T-cell (primary cell): ENCODE measurements at regions of chr10 and their contacts with region 1.

Region 1: DNA sequence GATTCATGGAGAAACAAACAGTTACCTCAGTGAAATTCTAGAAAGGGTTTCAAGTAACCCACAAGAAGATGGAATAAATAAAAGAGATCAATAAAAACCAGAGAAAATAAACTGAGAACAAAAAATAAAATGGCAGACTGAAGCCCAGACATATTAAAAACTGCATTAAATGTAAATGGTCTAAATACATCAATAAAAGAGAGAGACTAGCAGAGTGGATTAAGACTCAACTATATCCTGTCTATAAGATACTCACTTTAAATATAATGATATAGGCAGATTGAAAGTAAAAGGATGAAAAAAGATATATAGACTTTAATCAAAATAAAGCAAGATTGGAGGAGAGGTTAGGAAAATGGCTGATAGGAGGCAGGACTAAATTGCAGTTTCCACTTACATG is 18.8 kb upstream of the EBF3 start:
- DNase-seq: no peak
- ATAC-seq: no peak
- H3K4me3 ChIP-seq: no peak overlapping the region
- H3K4me3 Mint-ChIP-seq: no peak overlapping the region
- H3K27ac ChIP-seq: no peak overlapping the region
- H3K27ac Mint-ChIP-seq: no peak overlapping the region
- H3K4me1 ChIP-seq: no peaks in the 10 kb centered on the region
- H3K4me1 Mint-ChIP-seq: no peaks in the 10 kb centered on the region
- H3K27me3 ChIP-seq: peaks cover 2 to 32% of the 10 kb centered on the region in 2 experiments
- H3K27me3 Mint-ChIP-seq: peaks cover 55 to 64% of the 10 kb centered on the region in 2 donors

Region 2: DNA sequence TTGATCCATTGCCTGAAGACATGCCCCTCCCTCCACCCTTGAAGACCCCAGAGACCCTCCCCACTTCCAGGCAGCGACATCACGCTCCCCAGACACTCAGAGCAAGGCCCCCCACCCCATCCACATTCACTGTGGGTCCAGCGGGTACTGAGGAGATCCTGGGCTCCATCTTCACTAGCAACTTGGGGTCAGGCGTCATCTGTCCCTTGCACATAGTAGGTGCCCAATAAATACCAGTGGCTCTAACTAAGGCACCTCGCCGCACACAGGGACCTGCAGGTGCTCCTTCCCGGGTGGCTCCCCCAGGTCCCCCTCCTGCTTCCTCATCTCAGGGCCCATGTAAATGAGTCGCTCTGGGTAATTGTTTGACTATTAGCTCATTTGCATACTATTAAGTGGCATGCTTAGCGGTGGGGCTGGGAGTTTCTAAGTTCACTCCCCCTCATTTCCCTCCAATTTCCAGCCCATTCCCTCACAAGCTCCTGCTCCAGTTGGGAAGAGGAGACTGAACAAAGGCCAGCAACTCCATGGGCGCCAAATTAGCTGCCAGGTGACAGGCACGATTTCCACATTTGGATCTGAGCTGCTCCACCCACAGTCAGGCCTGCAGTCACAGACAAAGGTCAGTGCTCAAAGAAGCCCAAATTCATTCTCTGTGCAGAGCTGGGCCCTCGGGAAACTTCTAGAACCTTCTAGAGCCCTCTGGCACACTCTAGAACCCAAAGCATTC is 48.5 kb before region 1 on chr10:
- CTCF ChIA-PET with region 1: no interaction called
- POLR2A ChIA-PET with region 1: interaction called in 1 of 2 experiments, 12 read pairs
- DNase-seq: no peak
- ATAC-seq: no peak
- H3K4me3 ChIP-seq: no peak overlapping the region
- H3K4me3 Mint-ChIP-seq: no peak overlapping the region
- H3K27ac ChIP-seq: no peak overlapping the region
- H3K27ac Mint-ChIP-seq: no peak overlapping the region
- H3K4me1 ChIP-seq: no peaks in the 10 kb centered on the region
- H3K4me1 Mint-ChIP-seq: no peaks in the 10 kb centered on the region
- H3K27me3 ChIP-seq: peaks cover 0 to 22% of the 10 kb centered on the region in 2 experiments
- H3K27me3 Mint-ChIP-seq: peaks cover 6 to 20% of the 10 kb centered on the region in 2 donors

Region 3: GRCh38 chr10:130012129-130012528 is 29.3 kb after region 1 on chr10:
- CTCF ChIA-PET with region 1: interaction called in 1 of 2 experiments, 10 read pairs
- POLR2A ChIA-PET with region 1: no interaction called
- DNase-seq: no peak
- ATAC-seq: no peak
- H3K4me3 ChIP-seq: no peak overlapping the region
- H3K4me3 Mint-ChIP-seq: no peak overlapping the region
- H3K27ac ChIP-seq: no peak overlapping the region
- H3K27ac Mint-ChIP-seq: no peak overlapping the region
- H3K4me1 ChIP-seq: no peaks in the 10 kb centered on the region
- H3K4me1 Mint-ChIP-seq: no peaks in the 10 kb centered on the region
- H3K27me3 ChIP-seq: peaks cover 0 to 23% of the 10 kb centered on the region in 2 experiments
- H3K27me3 Mint-ChIP-seq: peaks cover 22 to 23% of the 10 kb centered on the region in 2 donors